GM10248 (cell line): ENCODE measurements at regions of chr9 and their contacts with region 1.

Region 1: GRCh38 chr9:114405294-114406034 is 17.7 kb upstream of the AKNA start:
- DNase-seq: peak; percentile 88
- CTCF ChIP-seq: peak; percentile 82

Region 2: GRCh38 chr9:114385412-114386181 is 19.9 kb before region 1 on chr9:
- CTCF ChIA-PET with region 1: interaction called, 60 read pairs
- POLR2A ChIA-PET with region 1: no interaction called
- DNase-seq: peak; percentile 86
- CTCF ChIP-seq: no peak

Region 3: GRCh38 chr9:114428466-114428865 is 23.0 kb after region 1 on chr9:
- CTCF ChIA-PET with region 1: interaction called, 46 read pairs
- POLR2A ChIA-PET with region 1: no interaction called
- DNase-seq: no peak
- CTCF ChIP-seq: no peak

Region 4: DNA sequence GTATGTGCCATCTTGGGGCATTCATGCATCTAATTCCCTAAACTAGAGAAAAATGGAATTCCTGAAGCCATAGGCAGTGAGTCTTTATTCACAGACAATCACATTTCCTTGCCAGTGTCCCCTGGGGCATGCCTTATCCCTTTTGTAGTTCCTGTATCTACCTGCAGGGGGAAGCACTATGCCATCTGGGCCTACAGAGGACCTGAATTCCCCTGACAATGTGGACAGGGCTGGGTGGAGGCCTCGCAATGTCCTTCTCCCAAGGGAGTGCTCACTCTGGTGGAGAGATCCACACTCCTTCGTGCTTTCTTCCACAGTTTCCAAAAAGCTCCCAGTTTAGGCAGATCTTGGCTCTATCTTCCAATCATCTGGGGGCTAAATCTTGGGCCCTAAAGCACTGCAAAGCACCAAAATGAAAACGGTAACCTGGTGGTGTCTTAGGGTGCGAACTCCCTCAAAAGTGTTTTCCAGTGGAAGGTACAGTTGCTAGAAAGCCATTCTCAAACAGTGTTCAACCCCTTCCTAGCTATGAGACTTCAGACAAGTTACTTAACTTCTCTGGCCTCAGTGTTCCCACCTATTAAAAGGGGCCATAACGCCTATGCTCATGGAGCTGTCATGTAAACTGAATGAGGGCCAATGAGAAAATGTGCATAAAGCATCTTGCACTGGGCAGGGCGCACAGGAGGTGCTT is 82.3 kb after region 1 on chr9:
- CTCF ChIA-PET with region 1: interaction called, 15 read pairs
- POLR2A ChIA-PET with region 1: no interaction called
- DNase-seq: peak; percentile 70
- CTCF ChIP-seq: peak; percentile 80

Region 5: GRCh38 chr9:114587385-114588202 is 182.1 kb after region 1 on chr9 and contains the start of gene ATP6V1G1:
- CTCF ChIA-PET with region 1: interaction called, 12 read pairs
- POLR2A ChIA-PET with region 1: no interaction called
- DNase-seq: peak; percentile 96
- CTCF ChIP-seq: peak; percentile 16

Region 6: DNA sequence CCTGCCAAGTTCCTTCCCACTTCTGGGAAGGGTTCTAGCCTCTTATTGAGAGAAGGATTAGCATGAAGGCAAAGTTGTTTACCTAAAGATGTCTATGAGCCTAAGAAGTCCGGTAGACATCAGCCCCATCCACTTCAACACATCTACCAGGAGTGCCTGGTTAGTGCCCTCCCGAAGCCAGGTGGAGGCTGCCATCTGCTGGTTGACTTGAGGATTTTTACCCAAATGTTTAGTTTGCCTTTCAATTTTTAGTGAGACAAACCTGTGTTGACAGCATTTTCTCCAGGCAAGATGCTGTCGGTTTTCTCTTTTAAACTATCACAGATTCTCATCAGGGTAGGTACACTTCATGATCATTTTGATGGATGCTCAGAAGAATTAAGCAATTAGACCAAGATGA is 608.5 kb after region 1 on chr9:
- CTCF ChIA-PET with region 1: interaction called, 11 read pairs
- POLR2A ChIA-PET with region 1: no interaction called
- DNase-seq: peak; percentile 70
- CTCF ChIP-seq: peak; percentile 53